ENCODE measurements at regions of chr5 and their contacts with region 1.

Region 1: DNA sequence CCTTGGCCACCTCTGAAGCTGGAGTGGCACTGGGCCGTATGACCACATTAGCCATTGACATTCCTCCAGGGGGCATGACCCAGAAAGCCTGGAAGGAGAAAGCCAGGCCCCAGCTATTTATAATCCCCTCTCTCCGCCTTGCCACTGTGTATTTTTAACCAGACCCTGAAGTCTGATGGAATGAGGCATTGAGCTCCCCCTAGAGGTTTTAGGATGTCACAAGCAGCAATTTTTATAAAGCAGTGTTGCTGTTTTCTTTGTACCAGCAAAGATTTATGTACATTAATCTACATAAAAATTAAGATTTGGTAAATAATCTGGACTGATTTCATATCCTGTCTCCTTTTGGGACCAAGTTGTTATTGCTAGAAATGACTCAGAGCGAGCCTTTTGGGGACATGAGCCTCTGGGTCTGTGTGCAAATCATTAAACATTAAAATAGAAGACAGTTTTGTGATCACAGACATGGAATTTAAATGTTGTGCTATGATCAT is 127.1 kb downstream of the TRIO start:
- DNase-seq: peak; percentile 75
- H3K4me3 ChIP-seq: no peak overlapping the region
- H3K27ac ChIP-seq: peak overlapping the region; percentile 76
- H3K4me1 ChIP-seq: peaks cover 52% of the 10 kb centered on the region
- H3K27me3 ChIP-seq: no peaks in the 10 kb centered on the region
- CTCF ChIP-seq: peak; percentile 73 to 74
- POLR2A ChIP-seq: no peak

Region 2: GRCh38 chr5:14108170-14108996 is 161.9 kb before region 1 on chr5:
- CTCF ChIA-PET with region 1: interaction called, 38 read pairs
- POLR2A ChIA-PET with region 1: no interaction called
- dilution Hi-C with region 1: no loop called
- intact Hi-C with region 1: loop called (anchors 1 kb)
- DNase-seq: peak; percentile 77
- H3K4me3 ChIP-seq: peak overlapping the region in 2 of 3 experiments; percentile 5
- H3K27ac ChIP-seq: no peak overlapping the region
- H3K4me1 ChIP-seq: peaks cover 30% of the 10 kb centered on the region
- H3K27me3 ChIP-seq: no peaks in the 10 kb centered on the region
- CTCF ChIP-seq: peak; percentile 62 to 82
- POLR2A ChIP-seq: no peak

Region 3: DNA sequence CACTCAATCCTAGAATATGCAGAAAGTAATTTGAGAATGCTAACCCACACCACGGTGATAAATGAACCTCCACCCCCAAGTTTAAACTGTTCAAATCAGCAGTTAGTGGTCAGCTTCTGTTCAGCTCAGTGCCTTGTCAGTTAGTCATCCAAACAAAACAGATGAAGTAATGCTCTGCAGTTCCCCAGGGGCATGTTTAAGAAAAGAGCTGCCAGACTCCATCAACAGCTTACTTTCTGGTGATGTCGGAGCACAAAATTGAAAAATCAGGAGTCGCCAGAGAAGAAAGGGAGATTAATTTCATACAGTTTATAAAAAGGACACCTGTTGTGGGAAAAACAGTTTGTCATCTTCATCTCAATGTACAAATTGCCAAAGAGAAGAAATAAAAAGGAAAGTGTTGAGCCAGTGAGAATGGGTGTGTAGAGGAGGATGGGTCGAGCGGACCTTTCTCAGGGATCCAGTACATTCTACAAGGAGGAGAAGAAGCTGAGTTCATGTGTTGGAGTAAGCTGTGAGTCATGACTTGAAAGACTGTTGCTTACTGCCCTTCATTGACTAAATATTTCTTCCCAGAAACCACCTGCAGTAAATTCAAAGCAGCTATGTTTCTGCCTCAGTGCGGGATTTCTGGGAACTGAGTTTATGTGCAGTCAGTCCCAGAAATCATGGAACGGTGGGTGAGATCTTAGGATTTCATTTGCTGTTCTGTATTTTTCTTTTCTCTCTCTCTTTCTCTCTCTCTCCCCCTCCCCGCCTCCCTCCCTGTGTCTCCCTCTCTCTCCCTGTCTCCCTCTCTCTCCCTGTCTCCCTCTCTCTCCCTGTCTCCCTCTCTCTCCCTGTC is 113.4 kb before region 1 on chr5:
- CTCF ChIA-PET with region 1: interaction called, 26 read pairs
- POLR2A ChIA-PET with region 1: interaction called, 3 read pairs
- dilution Hi-C with region 1: no loop called
- intact Hi-C with region 1: no loop called
- DNase-seq: peak; percentile 91
- H3K4me3 ChIP-seq: peak overlapping the region in 1 of 3 experiments; percentile 49
- H3K27ac ChIP-seq: peak overlapping the region; percentile 97
- H3K4me1 ChIP-seq: peaks cover 55% of the 10 kb centered on the region
- H3K27me3 ChIP-seq: no peaks in the 10 kb centered on the region
- CTCF ChIP-seq: no peak
- POLR2A ChIP-seq: no peak

Region 4: GRCh38 chr5:14204785-14205321 is 65.4 kb before region 1 on chr5:
- CTCF ChIA-PET with region 1: interaction called, 26 read pairs
- POLR2A ChIA-PET with region 1: interaction called, 4 read pairs
- dilution Hi-C with region 1: no loop called
- intact Hi-C with region 1: loop called (anchors 1 kb)
- DNase-seq: peak; percentile 93
- H3K4me3 ChIP-seq: peak overlapping the region in 1 of 3 experiments; percentile 14
- H3K27ac ChIP-seq: peak overlapping the region; percentile 87
- H3K4me1 ChIP-seq: peaks cover 82% of the 10 kb centered on the region
- H3K27me3 ChIP-seq: no peaks in the 10 kb centered on the region
- CTCF ChIP-seq: no peak
- POLR2A ChIP-seq: no peak

Region 5: DNA sequence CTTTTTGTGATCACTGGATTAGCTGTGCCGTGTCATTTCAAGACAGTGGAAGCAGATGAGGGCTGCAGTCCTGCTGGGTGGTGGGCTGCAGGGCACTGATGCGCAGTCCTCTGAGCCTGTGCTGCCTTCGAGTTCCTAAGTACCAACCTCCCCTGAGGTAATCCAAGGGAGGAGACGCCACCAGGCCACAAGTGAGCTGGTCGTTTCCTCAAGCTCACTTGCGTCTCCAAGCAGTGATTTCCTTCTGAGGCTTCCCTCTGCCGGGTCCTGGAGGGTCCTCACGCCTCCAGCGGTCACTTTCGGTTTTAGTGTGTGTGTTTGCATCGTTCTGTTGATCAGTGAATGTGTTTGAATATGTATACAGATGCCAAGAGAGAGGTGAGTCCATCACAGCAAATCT is 11.4 kb before region 1 on chr5:
- CTCF ChIA-PET with region 1: interaction called, 10 read pairs
- POLR2A ChIA-PET with region 1: no interaction called
- dilution Hi-C with region 1: no loop called
- intact Hi-C with region 1: no loop called
- DNase-seq: peak; percentile 60
- H3K4me3 ChIP-seq: no peak overlapping the region
- H3K27ac ChIP-seq: peak overlapping the region; percentile 38
- H3K4me1 ChIP-seq: peaks cover 50% of the 10 kb centered on the region
- H3K27me3 ChIP-seq: no peaks in the 10 kb centered on the region
- CTCF ChIP-seq: peak; percentile 7 to 25
- POLR2A ChIP-seq: no peak

Region 6: GRCh38 chr5:14534773-14535172 is 264.5 kb after region 1 on chr5:
- CTCF ChIA-PET with region 1: no interaction called
- POLR2A ChIA-PET with region 1: no interaction called
- dilution Hi-C with region 1: no loop called
- intact Hi-C with region 1: no loop called
- DNase-seq: no peak
- H3K4me3 ChIP-seq: no peak overlapping the region
- H3K27ac ChIP-seq: no peak overlapping the region
- H3K4me1 ChIP-seq: no peaks in the 10 kb centered on the region
- H3K27me3 ChIP-seq: peaks cover 0 to 8% of the 10 kb centered on the region in 2 experiments
- CTCF ChIP-seq: no peak
- POLR2A ChIP-seq: no peak